ENCODE measurements at regions of chr19 and their contacts with region 1.

Region 1: GRCh38 chr19:49502866-49503581 is 6.8 kb downstream of the RPS11 start:
- DNase-seq: peak; percentile 66
- ATAC-seq: no peak
- H3K4me3 Mint-ChIP-seq: no peak overlapping the region
- H3K27ac Mint-ChIP-seq: no peak overlapping the region
- H3K4me1 Mint-ChIP-seq: peaks cover 47% of the 10 kb centered on the region
- H3K27me3 Mint-ChIP-seq: no peaks in the 10 kb centered on the region

Region 2: DNA sequence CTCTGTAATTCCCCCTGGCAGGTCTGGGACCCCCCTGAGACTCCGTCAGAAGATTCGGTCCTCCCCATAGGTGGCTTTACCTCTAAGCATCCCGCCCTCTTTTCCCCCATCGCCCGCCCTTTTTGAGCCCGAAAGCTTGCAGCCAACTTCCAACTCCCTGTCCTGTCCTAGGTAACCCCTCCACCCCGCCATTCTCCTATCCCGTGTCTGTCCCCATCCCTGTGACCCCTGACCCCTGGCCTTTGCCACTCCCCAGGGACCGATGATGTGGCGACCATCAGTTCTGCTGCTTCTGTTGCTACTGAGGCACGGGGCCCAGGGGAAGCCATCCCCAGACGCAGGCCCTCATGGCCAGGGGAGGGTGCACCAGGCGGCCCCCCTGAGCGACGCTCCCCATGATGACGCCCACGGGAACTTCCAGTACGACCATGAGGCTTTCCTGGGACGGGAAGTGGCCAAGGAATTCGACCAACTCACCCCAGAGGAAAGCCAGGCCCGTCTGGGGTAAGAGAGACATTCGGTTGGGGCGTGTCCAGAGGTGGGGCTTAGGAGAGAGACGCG is 25.3 kb after region 1 on chr19:
- CTCF ChIA-PET with region 1: interaction called, 24 read pairs
- DNase-seq: no peak
- ATAC-seq: no peak
- H3K4me3 Mint-ChIP-seq: peak overlapping the region; percentile 69
- H3K27ac Mint-ChIP-seq: no peak overlapping the region
- H3K4me1 Mint-ChIP-seq: peaks cover 19% of the 10 kb centered on the region
- H3K27me3 Mint-ChIP-seq: peaks cover 3% of the 10 kb centered on the region

Region 3: DNA sequence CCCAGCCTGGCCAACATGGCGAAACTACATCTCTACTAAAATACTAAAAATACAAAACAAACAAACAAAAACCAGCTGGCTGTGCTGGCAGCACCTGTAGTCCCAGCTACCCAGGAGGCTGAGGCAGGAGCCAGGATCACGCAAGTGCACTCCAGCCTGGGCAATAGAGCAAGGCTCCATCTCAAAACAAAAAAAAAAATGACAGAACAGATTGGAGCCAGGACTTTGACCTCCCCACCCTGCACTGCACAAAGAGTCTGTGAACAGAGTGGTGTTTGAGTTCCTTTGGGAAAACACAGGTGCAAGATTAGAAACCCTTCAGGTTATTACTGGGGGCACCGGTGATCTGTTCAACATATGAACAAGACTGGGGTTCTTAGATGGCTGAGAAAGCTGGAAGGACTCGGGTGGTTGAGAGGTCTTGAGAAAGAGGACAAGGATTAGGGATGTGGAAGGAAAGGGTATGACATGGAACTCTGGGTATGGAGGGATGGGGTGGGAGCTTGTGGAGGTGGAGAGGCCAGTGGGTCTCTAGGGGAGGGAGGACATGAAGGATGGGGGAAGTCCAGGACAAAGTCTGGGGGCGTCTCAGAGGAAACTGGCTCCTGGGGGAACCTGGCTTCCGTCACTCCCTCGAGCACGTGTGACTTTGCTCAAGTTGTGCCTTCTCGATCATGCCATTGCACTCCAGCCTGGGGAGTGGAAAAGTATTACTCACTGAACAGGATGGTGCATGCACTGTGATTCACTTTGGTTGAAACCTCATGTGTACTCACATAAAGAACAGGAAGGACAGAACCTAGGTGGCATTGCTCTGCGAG is 50.6 kb after region 1 on chr19:
- CTCF ChIA-PET with region 1: interaction called, 21 read pairs
- DNase-seq: peak; percentile 67
- ATAC-seq: peak; percentile 64
- H3K4me3 Mint-ChIP-seq: no peak overlapping the region
- H3K27ac Mint-ChIP-seq: peak overlapping the region; percentile 93
- H3K4me1 Mint-ChIP-seq: peaks cover 55% of the 10 kb centered on the region
- H3K27me3 Mint-ChIP-seq: no peaks in the 10 kb centered on the region

Region 4: GRCh38 chr19:49580264-49581006 is 77.4 kb after region 1 on chr19 and contains the start of gene NOSIP:
- CTCF ChIA-PET with region 1: interaction called, 26 read pairs
- DNase-seq: peak; percentile 98
- ATAC-seq: peak; percentile 98
- H3K4me3 Mint-ChIP-seq: peak within 1 kb of the TSS; percentile 92
- H3K27ac Mint-ChIP-seq: peak within 1 kb of the TSS; percentile 94
- H3K4me1 Mint-ChIP-seq: peaks cover 28% of the 10 kb centered on the region
- H3K27me3 Mint-ChIP-seq: no peaks in the 10 kb centered on the region
- total RNA-seq, gene NOSIP: 77.3 to 96.1 TPM

Region 5: GRCh38 chr19:49624967-49625910 is 122.2 kb after region 1 on chr19:
- CTCF ChIA-PET with region 1: no interaction called
- DNase-seq: no peak
- ATAC-seq: peak; percentile 15
- H3K4me3 Mint-ChIP-seq: no peak overlapping the region
- H3K27ac Mint-ChIP-seq: no peak overlapping the region
- H3K4me1 Mint-ChIP-seq: no peaks in the 10 kb centered on the region
- H3K27me3 Mint-ChIP-seq: no peaks in the 10 kb centered on the region

Region 6: GRCh38 chr19:49676690-49677231 is 173.7 kb after region 1 on chr19:
- CTCF ChIA-PET with region 1: interaction called, 46 read pairs
- DNase-seq: peak; percentile 100
- ATAC-seq: peak; percentile 79
- H3K4me3 Mint-ChIP-seq: peak overlapping the region; percentile 74
- H3K27ac Mint-ChIP-seq: peak overlapping the region; percentile 99
- H3K4me1 Mint-ChIP-seq: peaks cover 38% of the 10 kb centered on the region
- H3K27me3 Mint-ChIP-seq: no peaks in the 10 kb centered on the region